Posterior vena cava (tissue), 2 donors: ENCODE measurements at regions of chr12 and their contacts with region 1.

Region 1: DNA sequence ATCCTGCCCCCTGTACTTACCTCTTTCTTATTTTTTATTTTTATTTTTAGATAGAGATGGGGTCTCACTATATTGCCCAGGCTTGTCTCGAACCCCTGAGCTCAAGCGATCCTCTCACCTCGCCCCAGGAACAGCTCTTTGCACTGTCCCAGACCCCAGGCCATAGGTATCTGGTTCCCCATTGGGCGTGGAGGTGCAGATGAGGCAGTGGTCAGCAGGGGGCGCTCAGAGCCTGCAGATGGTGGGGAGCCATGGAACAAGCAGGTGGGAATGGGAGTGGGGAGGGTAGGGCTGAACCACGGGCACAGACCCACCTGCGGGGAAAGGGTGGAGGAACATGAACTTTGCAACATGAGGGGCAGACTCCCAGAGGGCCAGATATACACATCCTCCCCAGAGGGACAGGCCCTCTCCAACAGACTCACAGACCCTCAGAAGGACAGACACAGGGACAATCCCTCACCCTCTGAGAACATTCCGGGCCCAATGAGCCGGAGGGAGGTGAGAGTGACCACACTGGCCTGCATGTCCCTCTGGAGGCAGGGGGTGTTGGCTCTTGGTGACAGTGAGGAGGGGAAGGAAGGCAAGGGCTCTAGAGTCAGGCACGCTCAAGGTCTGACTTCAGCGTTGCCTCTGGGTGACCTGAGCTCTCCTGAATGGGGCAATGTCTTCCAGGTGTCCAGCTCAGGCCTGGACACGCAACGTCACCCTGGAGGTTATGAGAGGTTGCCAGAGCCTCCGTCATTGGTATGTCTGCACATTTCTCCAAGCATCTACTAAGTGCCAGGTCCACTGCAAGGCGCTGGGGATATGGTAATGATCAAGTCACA is 34.9 kb downstream of the KRT80 start:
- DNase-seq: peak; percentile 93

Region 2: GRCh38 chr12:52069327-52070184 is 87.4 kb before region 1 on chr12 and contains the start of gene ATG101:
- intact Hi-C with region 1: no loop called
- DNase-seq: peak; percentile 97
- total RNA-seq, gene ATG101: 26.4 to 30.8 TPM

Region 3: DNA sequence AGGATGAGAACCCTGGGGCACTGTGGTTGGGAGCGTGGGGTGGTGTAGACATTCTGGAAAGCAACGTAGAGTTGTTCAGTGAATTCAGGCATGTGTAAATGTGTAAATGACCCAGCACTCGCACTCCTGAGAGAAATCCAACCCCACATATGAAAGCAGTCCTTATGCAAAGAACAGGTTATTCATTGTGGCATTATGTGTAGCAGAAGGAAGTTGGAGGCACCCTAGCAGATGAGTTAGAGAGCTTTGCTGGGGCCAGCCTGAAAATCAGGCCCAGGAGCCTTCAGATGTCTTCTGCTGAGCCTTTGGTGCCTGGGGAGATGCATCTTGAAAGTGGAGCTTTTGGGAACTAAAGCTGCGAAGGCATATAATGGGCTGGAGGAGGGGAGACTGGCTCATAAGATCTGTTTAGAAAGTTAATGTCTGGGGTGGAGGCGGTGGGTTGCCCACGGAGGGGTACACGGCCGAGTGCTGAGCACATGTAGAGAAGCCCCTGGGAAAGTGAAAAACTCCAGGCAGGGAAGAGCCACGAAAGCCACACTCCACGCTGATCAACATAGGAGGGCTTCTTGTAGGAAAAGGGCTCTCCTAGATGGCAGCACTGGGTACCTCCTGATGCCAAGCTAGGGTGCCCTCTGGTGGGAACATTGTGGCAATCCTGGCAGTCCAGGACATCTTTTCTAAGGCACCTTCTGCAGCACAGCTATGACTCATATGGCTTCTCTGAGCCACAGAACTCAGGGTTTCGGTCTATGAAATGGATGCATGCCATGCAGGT is 170.3 kb after region 1 on chr12:
- intact Hi-C with region 1: loop called (anchors 5 kb)
- DNase-seq: peak; percentile 83

Region 4: DNA sequence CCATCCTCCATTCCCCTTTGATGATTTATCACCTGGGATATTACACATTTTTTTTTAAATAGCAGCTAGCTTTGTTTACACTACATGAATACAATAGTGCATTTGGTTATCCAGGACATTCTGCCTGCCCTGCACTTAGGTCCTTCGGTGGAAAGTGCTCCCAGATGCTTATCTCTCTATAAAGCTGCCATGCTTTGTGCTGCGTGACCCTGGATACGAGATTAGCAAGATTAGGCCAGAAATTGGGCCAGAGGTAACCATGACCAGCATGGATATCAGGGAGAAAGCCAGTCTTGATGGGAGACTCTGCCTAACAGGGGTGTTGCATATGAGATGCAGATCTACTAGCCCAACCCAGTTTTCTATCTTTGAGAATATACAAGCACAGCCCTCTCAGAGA is 176.4 kb after region 1 on chr12:
- intact Hi-C with region 1: loop called (anchors 5 kb)
- DNase-seq: peak; percentile 14

Region 5: DNA sequence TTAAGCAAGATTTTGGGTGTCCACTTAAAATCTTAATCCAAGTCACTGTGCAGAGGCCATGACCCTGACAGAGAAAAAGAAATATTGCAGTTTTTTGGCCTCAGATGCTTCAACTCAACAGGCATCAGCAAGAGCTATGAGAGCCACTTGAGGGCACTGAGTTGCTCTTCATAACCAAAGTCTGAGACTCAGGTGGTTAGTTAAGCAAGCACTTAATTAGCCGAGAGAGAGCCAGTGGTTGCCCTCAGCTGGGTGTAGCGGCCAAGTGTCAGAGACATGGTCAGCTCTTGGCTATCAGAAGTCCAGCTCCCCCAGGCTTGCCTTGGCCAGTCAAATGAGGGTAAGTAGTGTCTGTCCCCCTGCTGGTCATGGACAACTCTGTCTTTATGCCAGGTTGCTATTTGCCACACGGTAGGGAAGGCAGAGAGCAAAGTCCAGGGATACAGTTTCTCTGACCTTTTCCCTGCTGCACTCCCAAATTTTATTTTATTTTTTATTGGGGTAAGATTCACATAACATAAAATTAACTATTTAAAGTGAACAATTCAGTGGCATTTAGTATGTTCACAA is 405.0 kb after region 1 on chr12:
- intact Hi-C with region 1: loop called in 1 of 2 experiments (anchors 10 kb)
- DNase-seq: no peak

Region 6: GRCh38 chr12:52870351-52871290 is 713.7 kb after region 1 on chr12:
- intact Hi-C with region 1: loop called (anchors 1 to 5 kb)
- DNase-seq: peak; percentile 87

Region 7: GRCh38 chr12:52879394-52880351 is 722.7 kb after region 1 on chr12:
- intact Hi-C with region 1: loop called in 1 of 2 experiments (anchors 5 kb)
- DNase-seq: peak; percentile 92

Region 8: GRCh38 chr12:52980693-52981423 is 823.9 kb after region 1 on chr12:
- intact Hi-C with region 1: loop called in 1 of 2 experiments (anchors 10 kb)
- DNase-seq: peak; percentile 94